Heart left ventricle (tissue), 16 donors: ENCODE measurements at regions of chr5 and their contacts with region 1.

Region 1: DNA sequence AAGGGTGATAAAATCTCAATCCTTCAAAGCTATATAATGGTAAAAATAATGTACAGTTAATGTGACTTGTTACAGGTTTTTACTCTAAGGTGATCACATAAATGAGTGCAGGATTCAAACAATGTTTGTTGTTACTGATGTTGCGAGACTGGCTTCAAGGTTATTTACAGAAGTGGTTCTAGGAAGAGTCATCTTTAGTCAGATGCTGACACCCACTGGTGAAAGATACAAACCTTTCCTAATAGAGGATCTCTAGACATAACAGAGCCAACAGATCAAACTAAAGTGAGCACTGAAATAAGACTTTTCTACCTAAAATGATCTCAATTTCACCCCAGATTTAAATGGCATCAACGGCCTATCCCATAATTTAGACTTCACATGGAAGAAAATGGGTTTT is 20.2 kb downstream of the ARSB start:
- DNase-seq: no peak
- ATAC-seq: peak; percentile 71 to 86 (median 81)
- H3K4me3 ChIP-seq: no peak overlapping the region
- H3K27ac ChIP-seq: no peak overlapping the region
- H3K4me1 ChIP-seq: no peaks in the 10 kb centered on the region
- H3K27me3 ChIP-seq: no peaks in the 10 kb centered on the region
- CTCF ChIP-seq: peak in 11 of 12 donors; percentile 36 to 69 (median 61)
- POLR2A ChIP-seq: no peak

Region 2: GRCh38 chr5:78899922-78900362 is 64.9 kb before region 1 on chr5:
- intact Hi-C with region 1: loop called in 9 of 10 experiments (anchors 2 to 10 kb)
- DNase-seq: no peak
- ATAC-seq: peak in 1 of 4 donors; percentile 36
- H3K4me3 ChIP-seq: no peak overlapping the region
- H3K27ac ChIP-seq: no peak overlapping the region
- H3K4me1 ChIP-seq: peaks cover 0 to 11% (median under 1%) of the 10 kb centered on the region in 12 donors
- H3K27me3 ChIP-seq: no peaks in the 10 kb centered on the region
- CTCF ChIP-seq: peak; percentile 40 to 74 (median 58)
- POLR2A ChIP-seq: no peak

Region 3: GRCh38 chr5:78920604-78921003 is 44.3 kb before region 1 on chr5:
- intact Hi-C with region 1: no loop called
- DNase-seq: peak in 1 of 5 donors; percentile 39
- ATAC-seq: peak in 3 of 4 donors; percentile 60 to 77 (median 74)
- H3K4me3 ChIP-seq: no peak overlapping the region
- H3K27ac ChIP-seq: no peak overlapping the region
- H3K4me1 ChIP-seq: peaks cover 0 to 5% (median 0%) of the 10 kb centered on the region in 12 donors
- H3K27me3 ChIP-seq: no peaks in the 10 kb centered on the region
- CTCF ChIP-seq: peak; percentile 4 to 62 (median 30)
- POLR2A ChIP-seq: no peak

Region 4: DNA sequence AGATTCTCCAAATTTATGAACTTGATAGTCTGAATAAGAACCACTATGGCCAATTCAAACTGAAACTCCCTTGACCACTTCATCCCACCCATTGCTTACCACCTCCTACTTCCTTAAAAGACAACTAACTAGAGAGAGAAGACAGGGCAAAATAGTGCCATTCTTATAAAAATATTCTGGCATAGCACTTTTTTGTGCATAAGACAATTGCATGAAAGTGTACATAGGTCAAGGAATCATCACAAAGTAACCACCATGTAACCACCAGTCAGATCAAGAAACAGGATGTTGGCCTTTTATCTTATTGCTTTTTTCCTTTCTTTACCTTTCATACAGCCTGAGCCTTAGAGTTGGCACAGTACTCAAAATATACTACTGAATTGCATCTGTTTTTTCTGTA is 28.3 kb after region 1 on chr5:
- intact Hi-C with region 1: no loop called
- DNase-seq: no peak
- ATAC-seq: no peak
- H3K4me3 ChIP-seq: no peak overlapping the region
- H3K27ac ChIP-seq: no peak overlapping the region
- H3K4me1 ChIP-seq: no peaks in the 10 kb centered on the region
- H3K27me3 ChIP-seq: no peaks in the 10 kb centered on the region
- CTCF ChIP-seq: no peak
- POLR2A ChIP-seq: no peak